Aorta (tissue), 5 donors: ENCODE measurements at regions of chr1 and their contacts with region 1.

Region 1: DNA sequence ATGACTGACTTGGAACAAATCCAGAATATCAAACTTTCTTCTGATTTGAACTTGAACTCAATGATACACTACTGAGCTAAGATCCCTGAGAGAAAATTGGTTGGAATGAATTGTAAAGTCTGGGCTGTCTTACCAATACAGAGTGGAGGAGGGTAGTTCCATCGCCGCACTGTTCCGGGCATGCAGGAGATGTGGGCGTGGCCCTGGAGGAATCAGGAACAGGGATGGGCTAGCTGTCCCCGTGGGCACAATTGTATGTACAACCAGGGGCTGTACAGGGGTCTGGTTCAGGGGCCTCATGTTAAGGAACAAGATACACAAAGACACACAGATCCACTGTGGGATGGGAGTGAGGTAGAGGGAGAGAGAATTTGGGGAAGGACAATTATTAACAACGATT is 144.3 kb downstream of the ZSCAN20 start:
- DNase-seq: no peak
- ATAC-seq: no peak
- H3K4me3 ChIP-seq: no peak overlapping the region
- H3K27ac ChIP-seq: no peak overlapping the region
- H3K4me1 ChIP-seq: no peaks in the 10 kb centered on the region
- H3K27me3 ChIP-seq: no peaks in the 10 kb centered on the region

Region 2: GRCh38 chr1:33228935-33229487 is 387.8 kb before region 1 on chr1:
- intact Hi-C with region 1: loop called in 1 of 2 experiments (anchors 10 kb)
- DNase-seq: no peak
- ATAC-seq: no peak
- H3K4me3 ChIP-seq: no peak overlapping the region
- H3K27ac ChIP-seq: no peak overlapping the region
- H3K4me1 ChIP-seq: no peaks in the 10 kb centered on the region
- H3K27me3 ChIP-seq: no peaks in the 10 kb centered on the region

Region 3: DNA sequence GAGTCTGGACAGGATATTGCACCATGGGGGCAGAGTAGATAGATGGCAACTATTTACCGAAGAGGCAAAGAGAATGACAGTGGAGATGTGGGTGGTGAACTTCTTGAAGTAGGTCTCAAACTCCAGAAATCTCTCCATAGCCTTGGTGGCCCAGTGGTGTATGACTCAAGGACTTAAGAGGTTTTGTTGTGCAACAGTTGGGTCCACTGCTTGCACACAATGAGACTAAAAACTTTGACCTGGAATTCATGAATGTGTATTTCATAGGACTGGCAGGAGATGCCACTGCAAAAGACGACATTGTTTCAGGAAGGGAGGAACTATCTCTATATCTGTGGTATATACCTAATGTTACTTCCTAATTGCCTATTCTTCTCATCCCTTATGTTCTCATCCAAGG is 68.5 kb before region 1 on chr1:
- intact Hi-C with region 1: loop called in 1 of 2 experiments (anchors 10 kb)
- DNase-seq: no peak
- ATAC-seq: no peak
- H3K4me3 ChIP-seq: no peak overlapping the region
- H3K27ac ChIP-seq: no peak overlapping the region
- H3K4me1 ChIP-seq: no peaks in the 10 kb centered on the region
- H3K27me3 ChIP-seq: no peaks in the 10 kb centered on the region